ENCODE measurements at regions of chr2 and their contacts with region 1.

Region 1: GRCh38 chr2:207769597-207770486 is at the start of gene FZD5:
- DNase-seq: peak; percentile 99 to 100
- H3K4me3 ChIP-seq: peak within 1 kb of the TSS; percentile 81
- H3K4me3 Mint-ChIP-seq: peak within 1 kb of the TSS; percentile 96
- H3K27ac Mint-ChIP-seq: peak within 1 kb of the TSS; percentile 88
- H3K4me1 ChIP-seq: peaks cover 60% of the 10 kb centered on the region
- H3K4me1 Mint-ChIP-seq: peaks cover 48% of the 10 kb centered on the region
- H3K27me3 ChIP-seq: no peaks in the 10 kb centered on the region
- H3K27me3 Mint-ChIP-seq: no peaks in the 10 kb centered on the region
- CTCF ChIP-seq: peak; percentile 64 to 68
- total RNA-seq, gene FZD5: 59.1 and 61.4 TPM in 2 replicates

Region 2: GRCh38 chr2:207692206-207693065 is 77.4 kb before region 1 on chr2:
- CTCF ChIA-PET with region 1: no interaction called
- POLR2A ChIA-PET with region 1: no interaction called
- intact Hi-C with region 1: no loop called
- DNase-seq: peak; percentile 54 to 58
- H3K4me3 ChIP-seq: no peak overlapping the region
- H3K4me3 Mint-ChIP-seq: no peak overlapping the region
- H3K27ac Mint-ChIP-seq: no peak overlapping the region
- H3K4me1 ChIP-seq: no peaks in the 10 kb centered on the region
- H3K4me1 Mint-ChIP-seq: peaks cover under 1% of the 10 kb centered on the region
- H3K27me3 ChIP-seq: no peaks in the 10 kb centered on the region
- H3K27me3 Mint-ChIP-seq: no peaks in the 10 kb centered on the region
- CTCF ChIP-seq: peak; percentile 42 to 49

Region 3: GRCh38 chr2:207792244-207792785 is 22.5 kb after region 1 on chr2:
- CTCF ChIA-PET with region 1: interaction called, 5 read pairs
- POLR2A ChIA-PET with region 1: interaction called, 20 read pairs
- intact Hi-C with region 1: loop called (anchors 1 kb)
- DNase-seq: peak; percentile 54 to 62
- H3K4me3 ChIP-seq: no peak overlapping the region
- H3K4me3 Mint-ChIP-seq: peak overlapping the region; percentile 34
- H3K27ac Mint-ChIP-seq: peak overlapping the region; percentile 93
- H3K4me1 ChIP-seq: peaks cover 44% of the 10 kb centered on the region
- H3K4me1 Mint-ChIP-seq: peaks cover 27% of the 10 kb centered on the region
- H3K27me3 ChIP-seq: no peaks in the 10 kb centered on the region
- H3K27me3 Mint-ChIP-seq: no peaks in the 10 kb centered on the region
- CTCF ChIP-seq: no peak

Region 4: GRCh38 chr2:207819839-207820784 is 50.3 kb after region 1 on chr2:
- CTCF ChIA-PET with region 1: interaction called, 8 read pairs
- POLR2A ChIA-PET with region 1: interaction called, 8 read pairs
- intact Hi-C with region 1: loop called (anchors 1 kb)
- DNase-seq: peak; percentile 92 to 96
- H3K4me3 ChIP-seq: no peak overlapping the region
- H3K4me3 Mint-ChIP-seq: peak overlapping the region; percentile 75
- H3K27ac Mint-ChIP-seq: peak overlapping the region; percentile 96
- H3K4me1 ChIP-seq: peaks cover 51% of the 10 kb centered on the region
- H3K4me1 Mint-ChIP-seq: peaks cover 20% of the 10 kb centered on the region
- H3K27me3 ChIP-seq: no peaks in the 10 kb centered on the region
- H3K27me3 Mint-ChIP-seq: no peaks in the 10 kb centered on the region
- CTCF ChIP-seq: no peak

Region 5: DNA sequence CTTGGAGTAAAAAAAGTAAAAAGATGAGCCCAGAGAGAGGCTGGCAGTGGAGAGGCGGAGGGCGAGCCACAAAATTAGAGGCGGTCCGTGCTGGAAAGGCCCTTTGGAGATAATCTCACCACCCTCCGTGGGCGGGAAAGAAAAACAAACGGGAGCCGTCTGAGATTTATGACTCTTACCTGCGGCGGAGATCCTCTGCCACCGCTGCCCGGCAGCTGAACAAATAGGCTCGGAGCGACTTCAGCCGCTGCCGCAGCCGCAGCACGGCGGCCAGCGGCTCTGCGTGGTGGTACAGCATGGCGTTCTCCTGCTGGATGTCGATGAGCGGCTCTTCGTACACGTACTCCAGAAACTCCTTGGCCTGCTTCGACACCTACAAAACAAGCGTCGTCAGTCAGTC is 160.9 kb after region 1 on chr2:
- CTCF ChIA-PET with region 1: interaction called, 4 read pairs
- POLR2A ChIA-PET with region 1: interaction called, 3 read pairs
- intact Hi-C with region 1: loop called (anchors 2 kb)
- DNase-seq: peak; percentile 86 to 89
- H3K4me3 ChIP-seq: peak overlapping the region; percentile 19
- H3K4me3 Mint-ChIP-seq: peak overlapping the region; percentile 79
- H3K27ac Mint-ChIP-seq: peak overlapping the region; percentile 87
- H3K4me1 ChIP-seq: peaks cover 77% of the 10 kb centered on the region
- H3K4me1 Mint-ChIP-seq: peaks cover 40% of the 10 kb centered on the region
- H3K27me3 ChIP-seq: no peaks in the 10 kb centered on the region
- H3K27me3 Mint-ChIP-seq: no peaks in the 10 kb centered on the region
- CTCF ChIP-seq: peak in 1 of 2 experiments; percentile 23

Region 6: DNA sequence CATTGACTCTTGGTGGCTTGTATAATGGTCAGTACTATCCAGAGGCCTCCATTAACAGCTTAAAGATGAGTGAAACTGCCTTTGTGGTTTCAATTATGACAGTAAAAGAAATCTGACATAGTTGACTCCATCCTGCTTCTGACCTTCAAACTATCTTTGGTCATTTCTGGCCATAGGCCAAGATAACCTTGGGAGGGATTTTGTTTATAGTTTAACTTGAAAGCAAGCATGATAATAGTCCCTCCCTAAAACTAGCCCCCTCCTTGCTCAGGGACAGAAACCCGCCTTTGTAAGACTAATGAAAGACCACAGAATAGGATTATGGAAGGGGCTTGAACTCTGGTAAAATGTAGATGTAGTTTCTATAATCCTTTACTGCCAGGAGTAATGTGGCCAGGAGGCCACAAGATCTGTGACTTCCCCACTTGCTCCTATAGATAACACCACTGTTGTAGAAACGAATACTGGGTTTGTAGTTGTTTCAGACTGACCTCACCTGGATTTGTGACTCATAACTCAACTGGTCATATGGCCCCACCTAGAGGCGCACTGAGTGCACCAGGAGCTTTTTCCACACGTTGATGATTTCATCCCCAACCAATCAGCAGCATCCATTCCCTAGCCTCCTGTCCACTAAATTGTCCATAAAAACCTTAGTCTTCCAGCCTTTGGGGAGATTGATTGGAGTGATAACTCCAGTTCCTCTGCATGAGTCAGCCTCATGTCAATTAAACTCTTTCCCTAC is 264.1 kb after region 1 on chr2:
- CTCF ChIA-PET with region 1: interaction called, 10 read pairs
- POLR2A ChIA-PET with region 1: no interaction called
- intact Hi-C with region 1: loop called (anchors 1 kb)
- DNase-seq: peak; percentile 82 to 85
- H3K4me3 ChIP-seq: no peak overlapping the region
- H3K4me3 Mint-ChIP-seq: no peak overlapping the region
- H3K27ac Mint-ChIP-seq: peak overlapping the region; percentile 70
- H3K4me1 ChIP-seq: peaks cover 51% of the 10 kb centered on the region
- H3K4me1 Mint-ChIP-seq: peaks cover 39% of the 10 kb centered on the region
- H3K27me3 ChIP-seq: no peaks in the 10 kb centered on the region
- H3K27me3 Mint-ChIP-seq: no peaks in the 10 kb centered on the region
- CTCF ChIP-seq: peak; percentile 36

Region 7: DNA sequence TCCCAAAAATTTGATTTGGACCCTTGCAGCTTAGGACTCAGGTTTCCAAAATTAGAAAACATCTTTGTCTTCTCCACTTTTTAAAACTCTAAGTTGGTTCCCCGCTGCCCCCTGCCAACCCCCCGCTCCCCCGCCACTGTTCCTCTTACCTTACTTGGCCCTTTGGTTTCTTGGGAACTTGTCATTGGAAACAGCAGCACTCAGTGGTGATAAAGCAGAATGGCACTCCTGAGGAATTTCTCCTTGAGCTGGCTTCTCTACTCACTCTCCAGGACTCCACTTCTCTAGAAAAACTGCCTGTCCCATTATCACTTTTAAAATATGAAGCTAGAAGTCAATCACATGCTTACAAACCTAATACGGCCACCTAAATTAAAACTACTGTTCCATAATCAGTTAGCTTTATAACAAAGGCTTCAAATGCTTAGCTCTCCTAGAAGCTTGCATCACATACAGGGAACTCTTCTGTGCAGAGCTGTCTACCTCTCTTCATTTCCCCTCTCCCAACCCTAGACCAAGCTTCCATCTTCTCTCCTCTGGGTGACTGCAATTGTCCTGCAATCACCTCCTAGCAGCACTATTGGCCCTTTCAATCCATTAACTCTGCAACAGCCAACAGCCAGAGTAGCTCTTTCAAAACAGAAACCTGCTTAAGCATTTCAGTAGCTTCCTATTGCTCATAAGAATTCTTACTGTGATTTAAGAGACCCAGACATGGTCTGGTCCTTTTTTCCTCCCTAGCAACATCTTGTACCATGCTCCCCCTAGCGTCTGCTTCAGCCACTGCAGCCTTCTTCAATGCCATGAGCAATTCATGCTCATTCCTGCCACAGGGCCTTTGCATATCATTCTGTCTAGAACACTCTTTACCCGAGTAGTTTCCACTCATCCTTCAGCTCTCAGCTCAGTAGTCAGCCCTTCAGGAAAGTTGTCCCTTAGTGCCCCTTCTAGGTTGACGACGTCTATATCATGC is 270.6 kb after region 1 on chr2:
- CTCF ChIA-PET with region 1: interaction called, 11 read pairs
- POLR2A ChIA-PET with region 1: interaction called, 4 read pairs
- intact Hi-C with region 1: loop called (anchors 1 kb)
- DNase-seq: peak; percentile 80 to 83
- H3K4me3 ChIP-seq: no peak overlapping the region
- H3K4me3 Mint-ChIP-seq: no peak overlapping the region
- H3K27ac Mint-ChIP-seq: peak overlapping the region; percentile 24
- H3K4me1 ChIP-seq: peaks cover 20% of the 10 kb centered on the region
- H3K4me1 Mint-ChIP-seq: peaks cover 26% of the 10 kb centered on the region
- H3K27me3 ChIP-seq: no peaks in the 10 kb centered on the region
- H3K27me3 Mint-ChIP-seq: no peaks in the 10 kb centered on the region
- CTCF ChIP-seq: peak; percentile 73 to 81

Region 8: DNA sequence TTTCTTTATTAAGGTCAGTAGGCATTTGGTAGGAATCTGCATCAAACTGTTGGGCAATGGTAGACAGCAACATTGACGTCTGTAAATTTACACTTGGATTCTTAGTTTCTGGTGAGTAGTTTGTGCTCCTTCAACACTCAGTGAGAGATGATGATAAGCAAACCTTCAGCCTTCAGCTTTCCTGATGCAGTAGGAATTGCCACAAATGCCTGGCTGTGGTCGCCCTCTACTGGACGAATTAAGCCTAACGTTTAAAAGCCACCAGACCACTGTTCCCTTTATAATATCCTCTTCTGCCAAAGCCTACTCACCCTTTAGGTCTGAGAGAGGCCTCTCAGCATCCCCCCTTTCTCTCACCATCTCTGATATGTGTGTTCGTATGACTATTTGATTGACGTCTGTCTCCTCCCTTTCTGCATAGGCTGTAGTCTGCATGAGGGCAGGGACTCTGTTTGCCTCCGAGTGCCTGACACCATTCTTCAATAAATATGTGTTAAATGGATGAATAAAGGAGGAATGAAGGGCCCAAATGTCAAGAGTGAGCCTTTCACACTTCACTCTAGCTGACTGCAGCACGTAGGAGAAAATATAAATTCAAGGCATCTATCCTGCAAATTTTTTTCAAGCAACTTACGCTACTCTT is 302.5 kb after region 1 on chr2:
- CTCF ChIA-PET with region 1: interaction called, 3 read pairs
- POLR2A ChIA-PET with region 1: no interaction called
- intact Hi-C with region 1: loop called (anchors 1 kb)
- DNase-seq: peak; percentile 73 to 83
- H3K4me3 ChIP-seq: no peak overlapping the region
- H3K4me3 Mint-ChIP-seq: no peak overlapping the region
- H3K27ac Mint-ChIP-seq: no peak overlapping the region
- H3K4me1 ChIP-seq: no peaks in the 10 kb centered on the region
- H3K4me1 Mint-ChIP-seq: peaks cover 3% of the 10 kb centered on the region
- H3K27me3 ChIP-seq: no peaks in the 10 kb centered on the region
- H3K27me3 Mint-ChIP-seq: no peaks in the 10 kb centered on the region
- CTCF ChIP-seq: peak; percentile 84

Measured in Caco-2 (cell line).